Pancreas (tissue), 10 donors: ENCODE measurements at regions of chr17 and their contacts with region 1.

Region 1: GRCh38 chr17:8162233-8162996 is at the start of gene VAMP2:
- DNase-seq: peak; percentile 71 to 94 (median 84)
- ATAC-seq: peak; percentile 62 to 81 (median 62)
- H3K4me3 ChIP-seq: peak within 1 kb of the TSS; percentile 68 to 100 (median 99)
- H3K27ac ChIP-seq: peak within 1 kb of the TSS; percentile 82 to 99 (median 96)
- H3K4me1 ChIP-seq: peaks cover 17 to 25% (median 17%) of the 10 kb centered on the region in 3 donors
- H3K27me3 ChIP-seq: no peaks in the 10 kb centered on the region
- CTCF ChIP-seq: no peak
- total RNA-seq, gene VAMP2: 19.5 to 35.7 (median 29.6) TPM

Region 2: GRCh38 chr17:7956228-7956965 is 206.0 kb before region 1 on chr17:
- intact Hi-C with region 1: no loop called
- DNase-seq: peak in 1 of 6 donors; percentile 22
- ATAC-seq: no peak
- H3K4me3 ChIP-seq: no peak overlapping the region
- H3K27ac ChIP-seq: no peak overlapping the region
- H3K4me1 ChIP-seq: no peaks in the 10 kb centered on the region
- H3K27me3 ChIP-seq: peaks cover 0 to 6% (median 2%) of the 10 kb centered on the region in 4 donors
- CTCF ChIP-seq: no peak

Region 3: GRCh38 chr17:8125157-8125946 is 37.1 kb before region 1 on chr17:
- intact Hi-C with region 1: loop called in 1 of 3 experiments (anchors 5 kb)
- DNase-seq: peak; percentile 65 to 92 (median 87)
- ATAC-seq: peak; percentile 46 to 69 (median 60)
- H3K4me3 ChIP-seq: peak overlapping the region; percentile 40 to 65 (median 53)
- H3K27ac ChIP-seq: peak overlapping the region in 1 of 4 donors; percentile 46
- H3K4me1 ChIP-seq: peaks cover 11 to 44% (median 20%) of the 10 kb centered on the region in 3 donors
- H3K27me3 ChIP-seq: peaks cover 0 to 6% (median 0%) of the 10 kb centered on the region in 4 donors
- CTCF ChIP-seq: no peak